OCI-LY7 (cell line): ENCODE measurements at regions of chr13 and their contacts with region 1.

Region 1: GRCh38 chr13:87942205-87942604 is 271.0 kb downstream of the SLITRK5 start:
- DNase-seq: no peak
- H3K4me3 ChIP-seq: no peak overlapping the region
- H3K27ac ChIP-seq: no peak overlapping the region
- H3K4me1 ChIP-seq: no peaks in the 10 kb centered on the region
- CTCF ChIP-seq: no peak

Region 2: DNA sequence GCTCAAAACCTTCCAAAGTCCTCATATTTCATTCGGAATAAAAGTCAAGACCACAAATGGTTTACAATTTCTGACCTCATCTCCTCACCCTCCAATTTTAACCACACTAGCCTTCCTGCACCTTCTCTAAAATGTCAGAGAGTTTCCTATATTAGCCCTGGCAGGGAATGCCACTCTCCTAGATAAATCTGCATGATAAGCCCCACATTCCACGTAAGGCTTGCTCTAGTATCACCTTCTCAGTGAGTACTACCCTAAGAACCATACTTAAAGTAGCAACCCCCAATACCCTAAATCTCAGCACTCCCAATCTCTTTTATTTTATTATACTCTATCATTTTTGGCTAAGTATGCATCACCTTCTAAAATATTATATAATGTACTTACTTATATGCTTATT is 371.5 kb before region 1 on chr13:
- CTCF ChIA-PET with region 1: no interaction called
- POLR2A ChIA-PET with region 1: no interaction called
- intact Hi-C with region 1: no loop called
- DNase-seq: no peak
- H3K4me3 ChIP-seq: no peak overlapping the region
- H3K27ac ChIP-seq: no peak overlapping the region
- H3K4me1 ChIP-seq: no peaks in the 10 kb centered on the region
- CTCF ChIP-seq: no peak

Region 3: GRCh38 chr13:87919956-87920355 is 22.2 kb before region 1 on chr13:
- CTCF ChIA-PET with region 1: no interaction called
- POLR2A ChIA-PET with region 1: no interaction called
- intact Hi-C with region 1: loop called (anchors 1 kb)
- DNase-seq: no peak
- H3K4me3 ChIP-seq: no peak overlapping the region
- H3K27ac ChIP-seq: no peak overlapping the region
- H3K4me1 ChIP-seq: no peaks in the 10 kb centered on the region
- CTCF ChIP-seq: no peak

Region 4: DNA sequence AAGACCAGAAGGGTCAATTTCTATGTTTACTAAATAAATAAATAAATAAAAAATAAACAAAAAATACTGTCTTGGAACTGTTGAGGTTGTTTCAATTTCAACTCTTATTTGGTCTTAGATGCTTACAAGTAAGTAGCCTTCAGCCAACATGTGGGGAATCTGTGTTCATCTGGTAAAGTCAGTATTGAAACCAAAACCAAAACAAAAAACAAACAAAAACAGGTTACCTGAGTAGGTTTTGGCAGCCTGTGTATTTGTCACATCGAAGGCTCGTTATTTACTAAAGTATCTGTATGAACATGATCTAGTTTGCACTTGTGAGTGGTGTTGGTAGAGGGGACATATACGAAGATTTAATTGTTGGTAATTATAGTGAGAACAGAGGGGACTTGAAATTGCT is 200.4 kb after region 1 on chr13:
- CTCF ChIA-PET with region 1: no interaction called
- POLR2A ChIA-PET with region 1: no interaction called
- intact Hi-C with region 1: no loop called
- DNase-seq: no peak
- H3K4me3 ChIP-seq: no peak overlapping the region
- H3K27ac ChIP-seq: no peak overlapping the region
- H3K4me1 ChIP-seq: no peaks in the 10 kb centered on the region
- CTCF ChIP-seq: no peak